Activated T-helper 2 cell treated with anti-CD3 and anti-CD28 coated beads, Interferon-gamma antibody, Interleukin-2, Interleukin-4, amounts not matched to agents 10 μg/mL and 5 μg/mL and 100 μg/mL, durations not matched to agents 14 hours and 24 hours and 36 hours (primary cell): ENCODE measurements at regions of chr9 and their contacts with region 1.

Region 1: GRCh38 chr9:68802525-68803015 is 97.5 kb downstream of the PIP5K1B start:
- DNase-seq: peak; percentile 13
- H3K4me3 Mint-ChIP-seq: no peak overlapping the region
- H3K27ac Mint-ChIP-seq: no peak overlapping the region
- H3K4me1 Mint-ChIP-seq: peaks cover 21% of the 10 kb centered on the region
- H3K27me3 Mint-ChIP-seq: no peaks in the 10 kb centered on the region

Region 2: GRCh38 chr9:68704814-68705530 is 97.6 kb before region 1 on chr9 and contains the start of gene PIP5K1B:
- intact Hi-C with region 1: loop called (anchors 5 kb)
- DNase-seq: peak; percentile 69
- H3K4me3 Mint-ChIP-seq: peak within 1 kb of the TSS; percentile 88
- H3K27ac Mint-ChIP-seq: peak within 1 kb of the TSS; percentile 67
- H3K4me1 Mint-ChIP-seq: peaks cover 54% of the 10 kb centered on the region
- H3K27me3 Mint-ChIP-seq: peaks cover 36% of the 10 kb centered on the region
- total RNA-seq, gene PIP5K1B: 76.2 and 77.2 TPM in 2 replicates

Region 3: GRCh38 chr9:68762570-68762969 is 40.0 kb before region 1 on chr9:
- intact Hi-C with region 1: loop called (anchors 5 kb)
- DNase-seq: no peak
- H3K4me3 Mint-ChIP-seq: no peak overlapping the region
- H3K27ac Mint-ChIP-seq: no peak overlapping the region
- H3K4me1 Mint-ChIP-seq: peaks cover 30% of the 10 kb centered on the region
- H3K27me3 Mint-ChIP-seq: peaks cover 3% of the 10 kb centered on the region

Region 4: DNA sequence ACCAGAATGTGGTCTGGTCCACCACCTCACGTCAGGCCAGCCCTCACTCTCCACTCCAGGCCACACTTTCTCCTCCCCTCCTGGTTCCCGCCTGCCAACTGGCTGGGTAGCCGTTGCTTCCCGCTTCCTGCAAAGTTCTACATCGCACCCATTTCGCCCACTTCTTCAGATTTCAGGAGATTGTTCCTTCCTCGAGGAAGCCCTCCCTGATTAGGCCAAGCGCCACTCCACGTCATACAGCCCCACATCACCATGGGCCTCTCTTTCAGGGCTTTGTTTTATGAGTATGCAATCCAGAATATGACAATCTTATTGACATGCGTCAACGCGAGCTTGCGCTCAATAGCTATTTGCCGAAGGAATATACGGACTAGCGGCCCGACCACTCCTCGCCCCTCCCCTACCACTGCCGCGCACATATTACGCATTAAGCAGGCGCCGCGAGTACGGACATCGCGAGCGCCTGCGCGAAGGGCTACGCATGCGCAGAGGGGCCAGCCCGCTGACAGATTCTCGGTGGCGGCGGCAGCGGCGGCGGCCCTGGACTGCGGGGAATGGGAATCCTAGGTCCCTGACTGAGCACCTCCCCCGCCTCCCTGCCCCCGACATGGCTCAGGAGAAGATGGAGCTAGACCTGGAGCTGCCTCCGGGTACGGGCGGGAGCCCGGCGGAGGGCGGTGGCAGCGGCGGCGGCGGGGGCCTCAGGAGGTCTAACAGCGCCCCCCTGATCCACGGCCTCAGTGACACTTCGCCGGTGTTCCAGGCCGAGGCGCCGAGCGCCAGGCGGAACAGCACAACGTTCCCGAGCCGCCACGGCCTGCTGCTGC is 22.8 kb before region 1 on chr9:
- intact Hi-C with region 1: loop called (anchors 2 kb)
- DNase-seq: peak; percentile 91
- H3K4me3 Mint-ChIP-seq: no peak overlapping the region
- H3K27ac Mint-ChIP-seq: no peak overlapping the region
- H3K4me1 Mint-ChIP-seq: peaks cover 17% of the 10 kb centered on the region
- H3K27me3 Mint-ChIP-seq: no peaks in the 10 kb centered on the region

Region 5: GRCh38 chr9:68844631-68845612 is 42.4 kb after region 1 on chr9:
- intact Hi-C with region 1: loop called (anchors 5 kb)
- DNase-seq: no peak
- H3K4me3 Mint-ChIP-seq: no peak overlapping the region
- H3K27ac Mint-ChIP-seq: peak overlapping the region; percentile 51
- H3K4me1 Mint-ChIP-seq: peaks cover 42% of the 10 kb centered on the region
- H3K27me3 Mint-ChIP-seq: no peaks in the 10 kb centered on the region

Region 6: GRCh38 chr9:68887232-68887631 is 84.7 kb after region 1 on chr9:
- intact Hi-C with region 1: loop called (anchors 5 kb)
- DNase-seq: no peak
- H3K4me3 Mint-ChIP-seq: peak overlapping the region; percentile 17
- H3K27ac Mint-ChIP-seq: peak overlapping the region; percentile 62
- H3K4me1 Mint-ChIP-seq: peaks cover 35% of the 10 kb centered on the region
- H3K27me3 Mint-ChIP-seq: no peaks in the 10 kb centered on the region